Activated CD4-positive, alpha-beta memory T cell treated with anti-CD3 and anti-CD28 coated beads, Interleukin-2, amount 10 ng/mL, durations not matched to agents 7 days and 5 days (primary cell): ENCODE measurements at regions of chr22 and their contacts with region 1.

Region 1: GRCh38 chr22:37686002-37686982 is at the start of gene NOL12:
- DNase-seq: peak; percentile 81
- H3K4me3 Mint-ChIP-seq: peak within 1 kb of the TSS; percentile 93
- H3K27ac Mint-ChIP-seq: peak within 1 kb of the TSS; percentile 88
- H3K4me1 Mint-ChIP-seq: peaks cover 28% of the 10 kb centered on the region
- H3K27me3 Mint-ChIP-seq: no peaks in the 10 kb centered on the region
- total RNA-seq, gene NOL12: 36.6 to 36.9 TPM

Region 2: GRCh38 chr22:37316875-37317371 is 369.4 kb before region 1 on chr22:
- CTCF ChIA-PET with region 1: no interaction called
- POLR2A ChIA-PET with region 1: no interaction called
- DNase-seq: peak; percentile 79
- H3K4me3 Mint-ChIP-seq: no peak overlapping the region
- H3K27ac Mint-ChIP-seq: no peak overlapping the region
- H3K4me1 Mint-ChIP-seq: peaks cover 37% of the 10 kb centered on the region
- H3K27me3 Mint-ChIP-seq: peaks cover 10% of the 10 kb centered on the region

Region 3: GRCh38 chr22:37696657-37697537 is 10.6 kb after region 1 on chr22 and contains the start of gene TRIOBP:
- CTCF ChIA-PET with region 1: interaction called, 5 read pairs
- POLR2A ChIA-PET with region 1: interaction called, 17 read pairs
- DNase-seq: peak; percentile 87
- H3K4me3 Mint-ChIP-seq: peak within 1 kb of the TSS; percentile 50
- H3K27ac Mint-ChIP-seq: no peak within 1 kb of the TSS
- H3K4me1 Mint-ChIP-seq: peaks cover 11% of the 10 kb centered on the region
- H3K27me3 Mint-ChIP-seq: no peaks in the 10 kb centered on the region
- total RNA-seq, gene TRIOBP: 40.9 to 42.7 TPM